MCF 10A (cell line): ENCODE measurements at regions of chr18 and their contacts with region 1.

Region 1: DNA sequence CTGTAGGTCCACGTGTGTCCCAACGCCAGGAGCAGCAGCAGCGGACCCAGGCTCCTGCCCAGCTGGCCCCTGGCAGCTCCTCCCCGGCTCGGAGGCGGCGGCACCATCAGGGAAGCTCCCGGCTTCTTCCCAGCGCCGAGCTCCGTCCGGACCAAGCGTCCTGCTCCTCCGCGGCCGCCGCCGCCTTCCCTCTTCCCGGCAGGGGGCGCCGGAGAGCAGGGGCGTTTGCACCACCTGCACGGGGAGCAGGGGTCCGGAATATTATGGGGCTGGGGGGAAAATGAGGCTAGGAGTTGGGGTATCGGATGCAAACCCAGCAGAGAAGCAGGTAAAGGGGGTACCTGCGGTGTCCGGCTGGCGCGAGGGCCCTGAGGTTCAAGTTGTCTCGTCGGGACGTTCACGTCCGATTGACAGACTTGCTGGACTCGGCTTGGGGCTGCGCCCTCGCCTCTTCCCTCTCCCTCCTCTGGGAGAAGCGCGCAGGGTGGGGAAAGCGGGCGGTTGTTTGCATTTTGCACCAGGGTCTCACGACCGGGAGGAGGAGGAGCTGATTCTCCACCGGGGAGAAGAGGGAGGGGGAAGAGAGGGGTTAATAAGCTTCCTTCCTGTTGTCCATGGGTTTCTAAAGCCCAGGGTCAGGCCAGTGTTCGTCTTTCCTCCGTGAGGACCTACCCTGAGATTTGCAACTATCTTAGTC is at the start of gene CCBE1:
- DNase-seq: peak; percentile 85
- H3K4me3 Mint-ChIP-seq: peak within 1 kb of the TSS; percentile 73
- H3K27ac Mint-ChIP-seq: peak within 1 kb of the TSS; percentile 69
- H3K4me1 Mint-ChIP-seq: peaks cover 36% of the 10 kb centered on the region
- H3K27me3 Mint-ChIP-seq: no peaks in the 10 kb centered on the region
- CTCF ChIP-seq: peak; percentile 99
- total RNA-seq, gene CCBE1: 23.8 and 28.9 TPM in 2 replicates

Region 2: GRCh38 chr18:59631583-59632181 is 65.7 kb before region 1 on chr18:
- CTCF ChIA-PET with region 1: interaction called, 42 read pairs
- POLR2A ChIA-PET with region 1: interaction called, 5 read pairs
- intact Hi-C with region 1: loop called (anchors 1 kb)
- DNase-seq: peak; percentile 48
- H3K4me3 Mint-ChIP-seq: no peak overlapping the region
- H3K27ac Mint-ChIP-seq: no peak overlapping the region
- H3K4me1 Mint-ChIP-seq: no peaks in the 10 kb centered on the region
- H3K27me3 Mint-ChIP-seq: peaks cover 14% of the 10 kb centered on the region
- CTCF ChIP-seq: peak; percentile 78

Region 3: DNA sequence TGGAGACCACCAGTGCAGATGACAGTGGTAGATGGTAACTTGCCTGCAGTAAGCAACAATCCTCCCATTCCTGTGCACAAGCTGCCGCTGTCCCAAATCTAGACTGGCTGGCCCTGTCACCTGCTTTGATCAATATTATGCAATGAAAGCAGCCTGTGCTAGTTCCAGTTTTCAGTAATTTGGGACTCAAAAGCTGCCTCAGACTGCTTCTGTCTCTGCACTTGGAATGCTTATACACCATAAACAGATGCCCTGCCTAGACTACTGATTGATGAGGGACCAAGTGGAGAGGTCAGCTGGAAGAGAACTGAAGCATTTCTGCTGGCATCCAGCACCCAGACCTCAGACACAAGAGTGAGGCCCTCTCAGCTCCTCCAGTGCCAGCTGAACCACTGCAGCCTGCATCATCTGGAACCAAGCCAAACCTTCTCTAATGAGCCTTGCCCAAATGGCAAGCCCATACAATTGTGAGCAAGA is 25.1 kb before region 1 on chr18:
- CTCF ChIA-PET with region 1: interaction called, 13 read pairs
- POLR2A ChIA-PET with region 1: no interaction called
- intact Hi-C with region 1: no loop called
- DNase-seq: peak; percentile 52
- H3K4me3 Mint-ChIP-seq: no peak overlapping the region
- H3K27ac Mint-ChIP-seq: no peak overlapping the region
- H3K4me1 Mint-ChIP-seq: peaks cover 5% of the 10 kb centered on the region
- H3K27me3 Mint-ChIP-seq: no peaks in the 10 kb centered on the region
- CTCF ChIP-seq: no peak

Region 4: DNA sequence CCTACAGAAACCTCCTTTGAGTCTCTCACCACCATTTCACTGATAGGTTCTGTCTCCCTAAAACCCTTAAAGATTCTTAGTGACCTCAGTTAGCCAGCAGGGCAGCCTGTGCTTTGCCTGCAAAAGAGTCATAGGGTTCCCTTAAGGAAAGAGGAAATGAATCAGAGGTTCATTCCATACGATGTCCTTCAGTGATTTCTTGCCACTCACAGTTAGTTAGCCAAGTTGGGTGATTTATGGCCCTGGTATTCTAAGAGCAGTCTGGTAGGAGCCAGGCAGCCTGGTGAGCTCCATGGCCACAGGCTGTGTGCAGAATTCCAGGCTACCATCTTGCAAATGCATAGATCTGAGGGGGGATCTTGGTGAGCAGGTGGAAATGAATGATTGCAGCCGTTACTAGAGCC is 18.6 kb after region 1 on chr18:
- CTCF ChIA-PET with region 1: interaction called, 13 read pairs
- POLR2A ChIA-PET with region 1: interaction called, 4 read pairs
- intact Hi-C with region 1: no loop called
- DNase-seq: peak; percentile 89
- H3K4me3 Mint-ChIP-seq: peak overlapping the region; percentile 18
- H3K27ac Mint-ChIP-seq: peak overlapping the region; percentile 47
- H3K4me1 Mint-ChIP-seq: peaks cover 35% of the 10 kb centered on the region
- H3K27me3 Mint-ChIP-seq: no peaks in the 10 kb centered on the region
- CTCF ChIP-seq: no peak

Region 5: DNA sequence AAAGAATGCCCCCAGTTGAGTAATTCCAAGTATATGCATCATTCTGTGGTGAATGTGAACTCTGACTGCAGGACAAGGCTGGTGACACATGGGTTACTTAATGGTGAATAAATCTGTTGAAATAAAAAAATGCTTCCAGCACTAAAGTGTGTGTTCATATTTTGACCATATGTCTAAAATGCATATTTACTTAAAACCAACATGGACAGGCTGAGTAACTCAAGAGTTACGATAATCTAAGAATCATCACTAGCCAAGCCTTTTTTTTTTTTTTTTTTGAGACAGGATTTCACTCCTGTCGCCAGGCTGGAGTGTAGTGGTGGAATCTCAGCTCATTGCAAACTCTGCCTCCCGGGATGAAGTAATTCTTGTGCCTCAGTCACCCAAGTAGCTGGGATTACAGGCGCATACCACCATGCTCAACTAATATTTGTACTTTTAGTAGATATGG is 46.9 kb after region 1 on chr18:
- CTCF ChIA-PET with region 1: interaction called, 7 read pairs
- POLR2A ChIA-PET with region 1: interaction called, 6 read pairs
- intact Hi-C with region 1: loop called (anchors 1 kb)
- DNase-seq: peak; percentile 86
- H3K4me3 Mint-ChIP-seq: no peak overlapping the region
- H3K27ac Mint-ChIP-seq: peak overlapping the region; percentile 74
- H3K4me1 Mint-ChIP-seq: peaks cover 24% of the 10 kb centered on the region
- H3K27me3 Mint-ChIP-seq: no peaks in the 10 kb centered on the region
- CTCF ChIP-seq: no peak

Region 6: DNA sequence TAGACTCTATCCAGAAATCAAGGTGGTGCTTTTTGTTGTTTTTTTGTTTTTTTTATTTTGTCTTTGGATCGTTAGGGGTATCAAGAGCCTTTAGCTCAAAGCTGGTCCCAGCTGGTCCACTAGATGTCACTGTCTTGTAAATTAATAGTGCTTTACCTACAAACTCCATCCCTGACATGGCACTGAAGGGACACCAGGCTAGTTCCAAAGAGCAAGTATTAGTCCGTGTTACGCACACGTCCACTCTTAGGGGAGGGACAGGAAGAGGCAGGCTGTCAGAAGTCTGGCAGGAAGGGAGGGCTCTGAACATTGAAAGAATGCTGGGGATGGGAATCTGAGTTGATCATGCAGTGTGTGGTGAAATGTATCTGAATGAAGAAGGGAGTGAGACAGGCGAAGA is 85.8 kb after region 1 on chr18:
- CTCF ChIA-PET with region 1: interaction called, 35 read pairs
- POLR2A ChIA-PET with region 1: interaction called, 7 read pairs
- intact Hi-C with region 1: loop called (anchors 2 kb)
- DNase-seq: peak; percentile 70
- H3K4me3 Mint-ChIP-seq: no peak overlapping the region
- H3K27ac Mint-ChIP-seq: peak overlapping the region; percentile 0
- H3K4me1 Mint-ChIP-seq: peaks cover 40% of the 10 kb centered on the region
- H3K27me3 Mint-ChIP-seq: no peaks in the 10 kb centered on the region
- CTCF ChIP-seq: peak; percentile 51